PC-3 (cell line): ENCODE measurements at regions of chr1 and their contacts with region 1.

Region 1: DNA sequence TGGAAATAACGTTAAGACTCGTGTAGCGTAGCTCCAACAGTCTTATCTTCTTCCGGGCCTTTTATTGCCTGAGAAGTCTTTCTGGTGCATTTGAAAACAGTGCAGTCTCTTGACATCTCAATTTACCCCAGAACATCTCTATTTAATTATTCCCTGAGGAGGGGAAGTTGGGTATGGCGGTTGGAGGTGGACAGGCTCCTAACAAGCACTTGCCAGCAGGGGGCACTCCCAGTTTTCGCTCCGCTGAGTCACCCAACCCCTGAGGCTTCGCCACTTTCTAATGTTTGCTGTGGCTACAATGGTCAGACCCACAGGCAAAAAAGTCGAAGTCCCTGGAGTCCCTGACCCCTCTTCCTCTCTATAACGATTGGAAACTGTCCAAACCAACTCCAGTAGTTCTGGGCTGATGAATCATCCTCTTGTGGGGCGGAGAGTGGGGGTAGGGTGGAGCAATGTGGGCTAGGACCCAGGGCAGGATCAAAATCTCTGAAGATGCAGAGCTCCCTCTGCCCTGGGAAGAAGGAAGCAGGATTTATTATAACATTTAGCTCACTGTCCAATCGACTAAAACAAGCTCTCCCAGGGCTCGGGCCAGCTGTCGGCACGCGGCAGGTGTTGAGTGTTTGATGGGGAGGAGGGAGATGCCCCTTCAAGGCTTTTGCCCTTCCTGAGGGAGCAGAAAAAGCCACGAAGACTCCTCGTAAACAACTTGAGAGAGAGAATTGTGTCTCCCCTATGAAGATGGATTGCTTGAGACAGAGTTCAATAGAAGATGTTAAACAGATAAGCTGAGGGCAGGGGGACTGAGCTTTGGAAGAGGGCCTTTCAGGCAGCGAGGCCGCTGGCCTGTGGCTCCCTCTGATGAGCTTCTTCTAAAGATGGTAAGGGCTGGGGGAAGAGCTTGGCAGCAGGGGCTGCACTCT is 85.7 kb downstream of the BRINP2 start:
- DNase-seq: peak; percentile 97
- ATAC-seq: peak; percentile 72
- H3K4me3 ChIP-seq: peak overlapping the region; percentile 52
- H3K27ac ChIP-seq: peak overlapping the region; percentile 100
- H3K4me1 ChIP-seq: peaks cover 33% of the 10 kb centered on the region
- H3K27me3 ChIP-seq: no peaks in the 10 kb centered on the region
- CTCF ChIP-seq: peak; percentile 76

Region 2: GRCh38 chr1:176897350-176898236 is 358.8 kb before region 1 on chr1:
- CTCF ChIA-PET with region 1: interaction called, 4 read pairs
- POLR2A ChIA-PET with region 1: no interaction called
- intact Hi-C with region 1: loop called (anchors 1 kb)
- DNase-seq: peak; percentile 72
- ATAC-seq: peak; percentile 80
- H3K4me3 ChIP-seq: peak overlapping the region; percentile 57
- H3K27ac ChIP-seq: no peak overlapping the region
- H3K4me1 ChIP-seq: no peaks in the 10 kb centered on the region
- H3K27me3 ChIP-seq: peaks cover 32% of the 10 kb centered on the region; the same call in 1 of the 2 replicates
- CTCF ChIP-seq: peak; percentile 85

Region 3: GRCh38 chr1:177181631-177182291 is 74.7 kb before region 1 on chr1:
- CTCF ChIA-PET with region 1: interaction called, 13 read pairs
- POLR2A ChIA-PET with region 1: no interaction called
- intact Hi-C with region 1: loop called (anchors 2 kb)
- DNase-seq: peak; percentile 78
- ATAC-seq: peak; percentile 93
- H3K4me3 ChIP-seq: peak overlapping the region; percentile 57
- H3K27ac ChIP-seq: no peak overlapping the region
- H3K4me1 ChIP-seq: peaks cover 11% of the 10 kb centered on the region
- H3K27me3 ChIP-seq: no peaks in the 10 kb centered on the region
- CTCF ChIP-seq: peak; percentile 79

Region 4: GRCh38 chr1:177274687-177275211 is 18.3 kb after region 1 on chr1:
- CTCF ChIA-PET with region 1: interaction called, 4 read pairs
- POLR2A ChIA-PET with region 1: interaction called, 3 read pairs
- intact Hi-C with region 1: loop called (anchors 2 kb)
- DNase-seq: peak; percentile 74
- ATAC-seq: peak; percentile 37
- H3K4me3 ChIP-seq: no peak overlapping the region
- H3K27ac ChIP-seq: peak overlapping the region; percentile 73
- H3K4me1 ChIP-seq: peaks cover 55% of the 10 kb centered on the region
- H3K27me3 ChIP-seq: no peaks in the 10 kb centered on the region
- CTCF ChIP-seq: no peak

Region 5: GRCh38 chr1:177300431-177300830 is 44.0 kb after region 1 on chr1:
- CTCF ChIA-PET with region 1: no interaction called
- POLR2A ChIA-PET with region 1: no interaction called
- intact Hi-C with region 1: no loop called
- DNase-seq: no peak
- ATAC-seq: no peak
- H3K4me3 ChIP-seq: no peak overlapping the region
- H3K27ac ChIP-seq: no peak overlapping the region
- H3K4me1 ChIP-seq: no peaks in the 10 kb centered on the region
- H3K27me3 ChIP-seq: no peaks in the 10 kb centered on the region
- CTCF ChIP-seq: no peak

Region 6: DNA sequence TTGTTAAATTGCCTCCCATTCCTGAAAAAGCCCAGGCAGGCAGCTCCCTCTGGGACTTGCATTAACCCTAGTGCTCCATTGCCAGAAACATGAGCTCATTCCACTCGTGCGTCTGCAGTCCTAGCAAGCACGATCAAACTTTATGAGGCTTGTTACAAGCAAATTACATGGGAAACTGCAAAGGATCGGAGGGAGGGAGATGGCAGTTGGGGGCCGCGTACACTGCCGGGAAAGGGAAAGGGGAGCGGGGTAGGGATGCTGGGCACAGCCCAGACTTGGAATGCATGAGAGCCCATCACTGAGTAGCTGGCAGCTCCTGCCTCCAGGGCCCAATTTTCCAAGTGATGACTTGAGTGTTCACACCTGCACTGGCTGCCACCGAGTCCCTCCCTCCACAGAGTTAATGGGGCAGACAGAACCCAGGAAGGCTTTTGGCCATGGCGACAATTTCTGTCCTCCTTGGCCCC is 84.2 kb after region 1 on chr1:
- CTCF ChIA-PET with region 1: no interaction called
- POLR2A ChIA-PET with region 1: no interaction called
- intact Hi-C with region 1: no loop called
- DNase-seq: no peak
- ATAC-seq: no peak
- H3K4me3 ChIP-seq: no peak overlapping the region
- H3K27ac ChIP-seq: no peak overlapping the region
- H3K4me1 ChIP-seq: no peaks in the 10 kb centered on the region
- H3K27me3 ChIP-seq: no peaks in the 10 kb centered on the region
- CTCF ChIP-seq: no peak

Region 7: DNA sequence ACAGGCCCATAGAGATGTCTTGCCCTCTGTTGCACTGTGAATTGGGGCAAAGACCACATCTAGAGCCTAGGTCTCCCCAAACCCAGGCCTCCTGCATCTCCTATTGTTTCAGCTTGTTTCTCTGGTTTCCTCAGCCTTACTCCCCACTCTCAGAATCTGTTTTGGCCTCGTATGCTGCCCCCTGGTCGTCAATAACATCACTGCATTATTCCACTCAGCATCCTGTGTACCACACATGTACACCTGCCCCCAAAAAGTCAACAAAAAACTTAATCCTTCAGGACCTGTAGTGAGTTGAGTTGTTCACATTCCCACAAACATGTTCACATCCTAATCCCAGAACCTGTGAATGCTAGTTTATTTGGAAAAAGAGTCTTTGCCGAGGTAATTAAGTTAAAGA is 99.2 kb after region 1 on chr1:
- CTCF ChIA-PET with region 1: interaction called, 14 read pairs
- POLR2A ChIA-PET with region 1: no interaction called
- intact Hi-C with region 1: loop called (anchors 1 kb)
- DNase-seq: peak; percentile 60
- ATAC-seq: peak; percentile 81
- H3K4me3 ChIP-seq: no peak overlapping the region
- H3K27ac ChIP-seq: no peak overlapping the region
- H3K4me1 ChIP-seq: 0 out of 2 replicates have a peak, but pooled peaks cover 3% of the 10 kb centered on the region
- H3K27me3 ChIP-seq: no peaks in the 10 kb centered on the region
- CTCF ChIP-seq: peak; percentile 72